ENCODE measurements at regions of chr4 and their contacts with region 1.

Region 1: GRCh38 chr4:81260443-81261101 is 45.5 kb upstream of the PRKG2 start:
- DNase-seq: no peak
- ATAC-seq: peak; percentile 46
- H3K4me3 ChIP-seq: no peak overlapping the region
- H3K27ac ChIP-seq: no peak overlapping the region
- H3K4me1 ChIP-seq: no peaks in the 10 kb centered on the region
- H3K27me3 ChIP-seq: no peaks in the 10 kb centered on the region
- CTCF ChIP-seq: peak; percentile 16 to 30 (median 28); a peak in 4 of 6 replicates
- EP300 ChIP-seq: no peak
- POLR2A ChIP-seq: no peak
- RAD21 ChIP-seq: 0 out of 2 replicates have a peak, but pooled peaks have one; percentile 3

Region 2: GRCh38 chr4:80610845-80611677 is 649.5 kb before region 1 on chr4:
- CTCF ChIA-PET with region 1: no interaction called
- POLR2A ChIA-PET with region 1: no interaction called
- RAD21 ChIA-PET with region 1: no interaction called
- SMC1A ChIA-PET with region 1: no interaction called
- in situ Hi-C with region 1: no loop called
- intact Hi-C with region 1: no loop called
- DNase-seq: peak; percentile 63
- ATAC-seq: peak; percentile 94
- H3K4me3 ChIP-seq: no peak overlapping the region
- H3K27ac ChIP-seq: no peak overlapping the region
- H3K4me1 ChIP-seq: 0 out of 2 replicates have a peak, but pooled peaks cover 6% of the 10 kb centered on the region
- H3K27me3 ChIP-seq: no peaks in the 10 kb centered on the region
- CTCF ChIP-seq: no peak
- EP300 ChIP-seq: peak; percentile 56 to 65; a peak in 2 of 4 replicates
- POLR2A ChIP-seq: no peak
- RAD21 ChIP-seq: no peak

Region 3: DNA sequence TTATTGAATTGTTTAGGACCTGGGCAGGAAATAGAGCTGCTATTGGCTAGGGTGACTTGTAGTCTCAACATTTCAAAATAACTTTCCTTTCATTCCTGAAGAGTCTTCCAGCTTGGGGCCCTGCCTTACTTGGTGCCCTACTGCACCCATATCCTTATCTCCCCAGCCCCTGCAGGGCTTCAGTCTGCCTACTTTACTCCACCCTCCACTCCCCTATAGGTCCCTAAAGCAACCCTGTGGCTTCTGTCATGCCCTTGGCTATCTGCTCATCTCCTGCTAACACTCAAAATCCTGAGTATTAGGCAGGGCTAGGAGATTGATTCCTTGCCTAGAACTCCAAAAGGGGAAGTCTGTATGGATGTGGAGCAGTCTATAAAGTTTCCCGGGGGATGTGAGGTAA is 12.1 kb after region 1 on chr4:
- CTCF ChIA-PET with region 1: interaction called, 13 read pairs
- POLR2A ChIA-PET with region 1: no interaction called
- RAD21 ChIA-PET with region 1: no interaction called
- SMC1A ChIA-PET with region 1: no interaction called
- in situ Hi-C with region 1: no loop called
- intact Hi-C with region 1: no loop called
- DNase-seq: no peak
- ATAC-seq: no peak
- H3K4me3 ChIP-seq: no peak overlapping the region
- H3K27ac ChIP-seq: no peak overlapping the region
- H3K4me1 ChIP-seq: no peaks in the 10 kb centered on the region
- H3K27me3 ChIP-seq: no peaks in the 10 kb centered on the region
- CTCF ChIP-seq: no peak
- EP300 ChIP-seq: no peak
- POLR2A ChIP-seq: no peak
- RAD21 ChIP-seq: no peak

Region 4: GRCh38 chr4:81421346-81422218 is 161.0 kb after region 1 on chr4:
- CTCF ChIA-PET with region 1: no interaction called
- POLR2A ChIA-PET with region 1: no interaction called
- RAD21 ChIA-PET with region 1: no interaction called
- SMC1A ChIA-PET with region 1: no interaction called
- in situ Hi-C with region 1: no loop called
- intact Hi-C with region 1: no loop called
- DNase-seq: peak; percentile 26
- ATAC-seq: peak; percentile 99
- H3K4me3 ChIP-seq: no peak overlapping the region
- H3K27ac ChIP-seq: no peak overlapping the region
- H3K4me1 ChIP-seq: peaks cover 7% of the 10 kb centered on the region
- H3K27me3 ChIP-seq: no peaks in the 10 kb centered on the region
- CTCF ChIP-seq: no peak
- EP300 ChIP-seq: no peak
- POLR2A ChIP-seq: no peak
- RAD21 ChIP-seq: no peak

Measured in GM12878 (cell line).